Thyroid gland (tissue), 4 donors: ENCODE measurements at regions of chr15 and their contacts with region 1.

Region 1: DNA sequence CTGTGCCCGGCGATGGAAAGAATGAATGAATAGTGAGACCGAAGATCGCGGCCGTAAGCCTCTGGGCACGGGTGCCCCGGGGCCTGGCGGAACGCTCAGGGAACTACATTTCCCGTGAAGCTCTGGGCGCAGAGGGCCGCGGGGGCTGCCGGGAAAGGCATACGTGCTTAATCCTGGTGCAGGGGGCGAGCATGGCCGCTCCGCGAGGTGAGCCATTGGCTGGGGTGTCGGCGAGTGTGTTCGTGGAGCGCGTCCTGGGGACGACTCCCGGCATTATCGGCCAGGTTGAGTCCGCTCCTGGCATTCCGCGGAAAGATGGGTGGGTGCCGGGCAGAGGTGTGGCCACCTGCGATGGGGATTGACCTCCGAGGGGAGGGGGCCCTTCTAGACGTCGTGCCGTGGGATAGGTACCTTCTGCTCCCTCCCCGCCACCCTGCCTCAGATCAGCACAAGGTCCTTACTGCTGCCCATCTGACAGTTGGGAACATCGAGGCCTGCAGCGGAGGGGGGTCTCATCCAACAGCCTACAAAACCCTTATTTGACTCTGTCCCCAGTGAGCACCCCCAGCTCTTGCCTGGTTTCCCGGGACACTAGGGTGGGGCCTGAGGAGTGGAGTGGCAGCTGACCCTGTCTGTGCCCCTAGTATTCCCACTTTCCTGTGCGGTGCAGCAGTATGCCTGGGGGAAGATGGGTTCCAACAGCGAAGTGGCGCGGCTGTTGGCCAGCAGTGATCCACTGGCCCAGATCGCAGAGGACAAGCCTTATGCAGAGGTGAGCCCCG is at the start of gene MPI:
- DNase-seq: peak; percentile 78 to 81
- H3K4me3 ChIP-seq: peak within 1 kb of the TSS; percentile 41 to 79 (median 61)
- H3K27ac ChIP-seq: peak within 1 kb of the TSS; percentile 39 to 79 (median 47)
- H3K4me1 ChIP-seq: peaks cover 4 to 34% of the 10 kb centered on the region in 2 donors
- H3K27me3 ChIP-seq: no peaks in the 10 kb centered on the region
- CTCF ChIP-seq: peak in 4 of 6 experiments; percentile 19 to 44 (median 26)
- POLR2A ChIP-seq: peak in 1 of 2 donors; percentile 68
- total RNA-seq, gene MPI: 72.2 to 91.1 (median 88.5) TPM

Region 2: GRCh38 chr15:74816808-74817674 is 73.0 kb before region 1 on chr15:
- intact Hi-C with region 1: no loop called
- DNase-seq: no peak
- H3K4me3 ChIP-seq: no peak overlapping the region
- H3K27ac ChIP-seq: no peak overlapping the region
- H3K4me1 ChIP-seq: no peaks in the 10 kb centered on the region
- H3K27me3 ChIP-seq: no peaks in the 10 kb centered on the region
- CTCF ChIP-seq: no peak
- POLR2A ChIP-seq: no peak

Region 3: GRCh38 chr15:74842581-74843444 is 47.3 kb before region 1 on chr15 and contains the start of gene ULK3:
- intact Hi-C with region 1: loop called (anchors 5 kb)
- DNase-seq: peak; percentile 95
- H3K4me3 ChIP-seq: peak within 1 kb of the TSS; percentile 60 to 91 (median 61)
- H3K27ac ChIP-seq: peak within 1 kb of the TSS; percentile 84 to 94 (median 88)
- H3K4me1 ChIP-seq: peaks cover 23 to 30% of the 10 kb centered on the region in 2 donors
- H3K27me3 ChIP-seq: no peaks in the 10 kb centered on the region
- CTCF ChIP-seq: peak in 5 of 6 experiments; percentile 28 to 94 (median 91)
- POLR2A ChIP-seq: peak; percentile 51 to 77
- total RNA-seq, gene ULK3: 40.9 to 91.1 (median 74.7) TPM